Tibial artery (tissue), 4 donors: ENCODE measurements at regions of chr18 and their contacts with region 1.

Region 1: DNA sequence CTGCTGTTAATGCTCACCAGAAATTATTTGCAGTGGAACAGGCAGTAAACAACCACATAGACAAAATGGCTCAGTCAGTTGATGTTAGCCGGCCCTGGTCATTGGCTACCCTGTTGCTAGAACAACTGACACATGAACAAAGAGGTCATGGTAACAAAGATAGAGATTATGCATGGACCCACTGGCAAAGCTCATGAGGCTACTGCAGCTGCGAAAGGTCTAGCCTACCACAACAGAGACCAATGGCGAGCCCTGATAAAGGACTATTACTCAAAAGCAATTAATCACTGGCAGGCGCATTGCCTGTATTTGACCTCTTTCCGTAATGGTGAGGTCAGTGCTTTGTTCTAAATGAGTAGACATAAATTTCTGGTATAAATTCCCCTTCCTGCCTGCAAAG is 474.2 kb downstream of the DSC3 start:
- DNase-seq: no peak
- H3K4me3 ChIP-seq: no peak overlapping the region
- H3K27ac ChIP-seq: no peak overlapping the region
- H3K4me1 ChIP-seq: no peaks in the 10 kb centered on the region
- H3K27me3 ChIP-seq: no peaks in the 10 kb centered on the region
- CTCF ChIP-seq: no peak

Region 2: GRCh38 chr18:30532379-30532778 is 36.0 kb before region 1 on chr18:
- intact Hi-C with region 1: no loop called
- DNase-seq: no peak
- H3K4me3 ChIP-seq: no peak overlapping the region
- H3K27ac ChIP-seq: no peak overlapping the region
- H3K4me1 ChIP-seq: no peaks in the 10 kb centered on the region
- H3K27me3 ChIP-seq: no peaks in the 10 kb centered on the region
- CTCF ChIP-seq: no peak

Region 3: GRCh38 chr18:30763902-30764350 is 195.6 kb after region 1 on chr18:
- intact Hi-C with region 1: no loop called
- DNase-seq: no peak
- H3K4me3 ChIP-seq: no peak overlapping the region
- H3K27ac ChIP-seq: no peak overlapping the region
- H3K4me1 ChIP-seq: no peaks in the 10 kb centered on the region
- H3K27me3 ChIP-seq: no peaks in the 10 kb centered on the region
- CTCF ChIP-seq: no peak

Region 4: DNA sequence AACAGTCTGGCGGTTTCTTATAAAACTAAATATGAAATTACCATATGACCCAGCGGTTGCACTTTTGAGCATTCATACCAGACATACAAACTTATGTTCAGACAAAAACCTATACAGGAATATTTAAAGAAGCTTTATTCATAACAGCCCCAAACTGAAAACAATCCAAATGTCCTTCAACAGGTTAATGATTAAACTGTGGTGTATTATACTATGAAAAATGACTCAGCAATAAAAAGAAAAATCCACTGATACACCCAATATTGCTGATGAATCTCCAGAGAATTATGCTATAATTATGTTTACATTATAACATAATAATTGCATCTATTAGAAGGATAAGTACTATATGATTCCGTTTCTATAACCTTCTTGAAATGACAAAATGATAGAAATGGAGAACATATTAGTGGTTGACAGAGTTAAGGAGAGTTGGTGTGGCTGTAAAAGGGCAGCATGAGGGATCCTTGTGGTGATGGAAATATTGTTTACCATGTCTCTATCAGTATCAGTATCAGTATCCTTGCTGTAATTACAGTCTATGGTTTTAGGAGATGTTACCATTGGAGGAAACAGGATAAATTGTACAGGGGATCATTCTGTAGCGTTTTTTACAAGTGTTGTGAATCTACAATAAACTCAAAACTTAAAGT is 347.1 kb after region 1 on chr18:
- intact Hi-C with region 1: loop called (anchors 5 kb)
- DNase-seq: no peak
- H3K4me3 ChIP-seq: no peak overlapping the region
- H3K27ac ChIP-seq: no peak overlapping the region
- H3K4me1 ChIP-seq: no peaks in the 10 kb centered on the region
- H3K27me3 ChIP-seq: no peaks in the 10 kb centered on the region
- CTCF ChIP-seq: no peak